GM13976 (cell line): ENCODE measurements at regions of chr9 and their contacts with region 1.

Region 1: GRCh38 chr9:72280913-72281500 is 84.0 kb downstream of the ZFAND5 start:
- DNase-seq: peak; percentile 73
- CTCF ChIP-seq: peak; percentile 90

Region 2: DNA sequence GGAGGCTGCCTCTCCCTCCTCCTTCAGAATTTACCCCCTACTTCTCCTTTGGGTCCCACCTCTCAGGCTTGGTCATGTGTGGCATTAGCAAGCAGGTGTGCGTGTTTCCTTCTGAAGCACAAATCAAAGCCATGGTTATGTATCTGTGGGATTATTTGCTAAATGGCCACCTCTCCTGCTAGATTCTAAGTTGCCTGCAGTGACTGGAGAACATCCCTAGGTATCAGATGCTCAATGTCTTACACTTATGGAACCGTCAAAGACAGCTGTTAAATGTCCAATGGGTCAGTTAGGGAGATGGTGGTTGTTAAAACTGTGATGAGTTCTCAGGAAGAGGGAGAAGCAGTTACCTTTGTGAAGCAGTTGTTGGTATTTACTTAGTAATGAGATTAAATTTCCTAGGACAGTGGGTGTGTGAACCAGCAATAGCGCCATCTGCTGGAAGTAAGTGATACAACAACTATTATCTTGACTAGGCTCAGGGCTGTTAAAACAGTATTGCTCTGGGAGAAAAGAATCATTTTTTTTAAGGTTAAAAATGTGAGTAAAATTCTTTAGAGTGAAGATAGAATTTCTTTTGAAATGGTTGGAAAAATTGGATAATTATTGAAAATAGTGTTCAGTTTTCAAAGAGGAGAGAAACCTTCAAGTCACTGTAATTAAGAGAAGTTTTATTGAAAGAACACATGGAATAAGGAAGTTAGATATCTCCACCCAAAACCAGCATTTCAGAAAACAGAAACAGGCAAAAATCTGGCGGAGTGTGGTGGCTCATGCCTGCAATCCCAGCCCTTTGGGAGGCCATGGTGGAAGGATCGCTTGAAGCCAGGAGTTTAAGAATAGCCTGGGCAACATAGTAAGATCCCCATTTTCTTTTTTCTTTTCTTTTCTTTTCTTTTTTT is 311.7 kb after region 1 on chr9:
- in situ Hi-C with region 1: loop called (anchors 5 kb)
- DNase-seq: peak; percentile 50
- CTCF ChIP-seq: peak; percentile 64

Region 3: DNA sequence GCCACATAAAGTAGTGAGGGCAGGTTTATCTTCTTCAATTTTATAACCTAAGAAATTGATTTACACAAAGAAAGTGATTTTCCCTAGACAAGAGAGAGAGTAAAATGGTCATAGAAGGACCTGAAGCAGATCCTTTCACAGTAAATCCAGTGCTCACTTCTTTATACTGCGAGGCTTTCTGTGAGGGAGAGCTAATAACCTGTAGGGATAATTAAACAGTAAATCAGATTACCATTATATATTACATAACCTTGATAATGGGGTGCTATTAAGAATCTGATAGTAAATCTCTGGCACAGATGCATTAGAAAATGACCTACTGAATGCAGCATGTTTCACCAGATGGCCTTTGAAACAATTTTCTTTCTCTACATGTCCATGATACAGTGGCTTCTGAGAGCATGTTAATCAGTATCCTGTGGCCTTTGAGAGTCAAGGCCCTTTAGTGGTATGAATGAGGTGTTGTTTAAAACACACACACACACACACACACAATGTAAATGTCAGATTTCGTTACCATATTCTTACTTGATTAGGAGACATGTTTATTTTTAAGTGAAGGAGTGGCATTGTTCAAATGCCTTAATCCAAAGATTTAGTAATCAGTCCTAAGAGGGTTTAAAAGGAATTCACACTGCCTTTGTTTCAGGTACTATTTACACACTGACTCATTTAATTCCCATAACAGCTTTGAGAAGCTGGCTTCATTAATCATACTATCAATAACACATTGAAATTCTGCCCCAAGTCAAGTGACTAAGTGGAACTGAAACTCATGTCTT is 547.1 kb after region 1 on chr9:
- in situ Hi-C with region 1: loop called (anchors 10 kb)
- DNase-seq: no peak
- CTCF ChIP-seq: no peak

Region 4: GRCh38 chr9:73038613-73039012 is 757.6 kb after region 1 on chr9:
- in situ Hi-C with region 1: loop called (anchors 25 kb)
- DNase-seq: no peak
- CTCF ChIP-seq: no peak